GM12878 (cell line): ENCODE measurements at regions of chr12 and their contacts with region 1.

Region 1: DNA sequence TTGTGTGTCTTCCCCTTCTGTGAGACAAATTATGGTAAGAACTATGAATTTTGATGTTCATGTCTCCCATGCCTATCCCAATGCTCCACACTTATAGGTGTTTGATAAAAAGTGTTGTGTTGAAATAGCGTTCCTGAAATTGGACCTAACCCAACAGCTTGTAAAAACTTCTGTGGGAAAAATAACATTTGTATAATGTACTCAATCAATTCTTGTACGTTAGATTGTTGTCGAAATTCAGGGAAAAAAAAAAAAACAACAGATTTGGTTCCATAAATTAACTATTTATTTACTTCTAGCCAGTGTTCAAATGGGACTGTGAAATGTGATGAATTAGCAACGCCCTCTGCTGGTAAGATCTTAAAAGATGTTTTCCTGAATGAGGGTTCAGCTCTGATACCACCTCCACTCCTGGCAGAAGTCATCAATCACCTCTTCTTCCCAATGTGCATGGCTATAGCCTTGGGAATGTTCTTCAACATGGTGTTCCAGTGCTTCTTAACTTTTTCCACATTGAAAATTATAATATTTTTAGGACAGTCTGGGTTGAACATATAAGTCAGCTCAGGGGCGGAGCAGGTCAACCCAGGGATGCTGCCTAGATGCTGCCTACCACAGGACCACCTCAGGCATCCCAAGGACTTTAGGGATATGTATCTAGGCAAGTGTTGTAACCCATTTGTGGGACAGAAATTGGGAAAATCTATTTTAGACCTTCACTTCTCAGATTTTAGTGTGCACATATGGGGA is 170.6 kb downstream of the OTOGL start:
- DNase-seq: no peak
- ATAC-seq: peak; percentile 86
- H3K4me3 ChIP-seq: no peak overlapping the region
- H3K27ac ChIP-seq: no peak overlapping the region
- H3K4me1 ChIP-seq: no peaks in the 10 kb centered on the region
- H3K27me3 ChIP-seq: no peaks in the 10 kb centered on the region; a peak in 1 of 4 replicates
- CTCF ChIP-seq: peak; percentile 46 to 69 (median 63); a peak in 5 of 6 replicates
- EP300 ChIP-seq: no peak
- POLR2A ChIP-seq: no peak
- RAD21 ChIP-seq: peak; percentile 65

Region 2: DNA sequence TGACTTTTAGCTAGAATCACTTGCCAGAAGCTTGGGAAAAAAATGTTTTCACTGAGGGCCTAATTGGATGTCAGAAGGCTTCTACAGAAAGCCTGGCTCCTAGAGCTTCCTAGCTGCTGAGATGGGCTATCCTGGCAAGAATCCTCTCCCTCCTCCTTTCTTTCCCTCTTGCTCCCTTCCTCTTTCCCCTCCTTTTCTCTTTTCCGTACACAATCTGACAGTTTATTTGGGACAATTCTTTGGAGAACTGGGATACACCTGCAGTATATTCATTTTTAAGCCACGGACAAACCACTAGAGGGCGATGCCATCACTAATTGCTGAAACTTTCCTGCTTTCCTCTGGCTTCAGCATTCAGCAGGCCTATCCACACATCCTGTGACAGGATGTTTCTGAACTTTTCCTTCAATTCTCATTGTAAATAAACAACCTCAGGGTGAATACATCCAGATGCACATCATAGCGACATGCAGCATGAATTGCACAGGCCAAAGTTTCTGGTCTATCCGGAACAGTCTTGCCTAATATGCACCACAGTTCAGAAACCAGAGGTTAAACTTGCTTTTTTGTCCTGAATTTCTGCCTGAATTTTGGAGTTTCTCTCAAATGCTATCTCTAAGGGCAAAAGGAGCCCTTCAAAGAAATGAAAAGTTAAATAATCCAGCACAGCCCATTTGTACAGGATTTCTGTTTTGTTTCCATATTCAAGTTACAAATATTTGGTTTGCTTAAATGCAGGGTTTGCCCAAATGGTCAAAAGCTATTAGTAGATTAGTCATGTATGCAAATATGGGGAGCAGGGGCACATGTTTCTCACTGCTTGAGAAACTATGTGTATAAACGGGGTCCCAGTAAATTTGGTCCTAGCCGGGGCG is 722.0 kb before region 1 on chr12:
- CTCF ChIA-PET with region 1: interaction called, 6 read pairs
- POLR2A ChIA-PET with region 1: no interaction called
- RAD21 ChIA-PET with region 1: no interaction called
- SMC1A ChIA-PET with region 1: interaction called, 3 read pairs
- in situ Hi-C with region 1: no loop called
- intact Hi-C with region 1: loop called (anchors 5 kb)
- DNase-seq: peak; percentile 9
- ATAC-seq: peak; percentile 88
- H3K4me3 ChIP-seq: no peak overlapping the region
- H3K27ac ChIP-seq: no peak overlapping the region
- H3K4me1 ChIP-seq: no peaks in the 10 kb centered on the region
- H3K27me3 ChIP-seq: no peaks in the 10 kb centered on the region
- CTCF ChIP-seq: peak; percentile 69 to 74 (median 71)
- EP300 ChIP-seq: no peak
- POLR2A ChIP-seq: no peak
- RAD21 ChIP-seq: peak; percentile 74

Region 3: DNA sequence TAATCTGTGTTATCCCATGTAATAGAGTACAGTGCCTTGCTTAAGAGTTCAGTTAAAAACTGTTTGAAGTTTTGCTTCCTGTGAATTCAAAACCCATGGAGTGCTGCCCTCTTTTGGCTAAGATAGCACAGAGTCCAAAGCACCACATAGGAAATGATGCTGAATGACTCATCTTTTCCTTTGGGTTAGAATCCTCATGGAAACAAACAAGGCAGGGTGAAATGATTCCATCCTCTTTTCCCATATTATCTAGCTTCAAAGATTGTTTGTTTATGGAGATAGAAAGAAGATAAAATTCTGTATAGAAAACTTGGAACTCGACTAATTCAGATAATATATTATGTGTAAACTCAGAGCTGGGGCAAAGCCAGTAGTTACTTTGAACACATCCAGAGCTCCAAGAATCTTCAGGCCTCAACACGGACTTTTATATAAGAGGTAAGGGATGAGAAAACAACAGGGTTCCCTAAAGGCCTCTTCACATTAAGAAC is 83.2 kb before region 1 on chr12:
- CTCF ChIA-PET with region 1: interaction called, 134 read pairs
- POLR2A ChIA-PET with region 1: no interaction called
- RAD21 ChIA-PET with region 1: interaction called, 4 read pairs
- SMC1A ChIA-PET with region 1: interaction called, 6 read pairs
- in situ Hi-C with region 1: no loop called
- intact Hi-C with region 1: no loop called
- DNase-seq: peak; percentile 26
- ATAC-seq: peak; percentile 77
- H3K4me3 ChIP-seq: no peak overlapping the region
- H3K27ac ChIP-seq: no peak overlapping the region
- H3K4me1 ChIP-seq: peaks cover 9% of the 10 kb centered on the region
- H3K27me3 ChIP-seq: no peaks in the 10 kb centered on the region; a peak in 1 of 4 replicates
- CTCF ChIP-seq: peak; percentile 58 to 74 (median 68)
- EP300 ChIP-seq: peak in 1 of 2 experiments; percentile 41; a peak in 1 of 4 replicates
- POLR2A ChIP-seq: no peak
- RAD21 ChIP-seq: peak; percentile 86

Region 4: DNA sequence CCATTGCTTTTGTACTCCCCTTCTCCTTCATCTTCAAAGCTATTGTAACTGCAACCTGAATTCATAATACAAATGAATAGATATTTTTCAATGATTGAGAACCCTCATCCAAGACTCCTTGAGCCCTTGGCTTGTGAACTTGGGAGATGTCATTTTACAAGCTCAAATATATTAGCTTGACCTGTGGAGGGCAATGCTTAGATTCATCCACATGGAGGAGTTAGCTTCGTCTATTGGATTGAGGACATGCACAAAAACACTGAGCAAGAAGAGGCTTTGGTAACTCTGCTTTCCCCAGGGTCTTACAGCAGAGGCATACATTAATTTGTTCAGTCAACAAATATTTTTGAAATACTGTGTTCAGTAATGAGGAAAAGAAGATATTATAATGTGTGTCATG is 69.6 kb before region 1 on chr12:
- CTCF ChIA-PET with region 1: interaction called, 134 read pairs
- POLR2A ChIA-PET with region 1: no interaction called
- RAD21 ChIA-PET with region 1: interaction called, 26 read pairs
- SMC1A ChIA-PET with region 1: interaction called, 57 read pairs
- in situ Hi-C with region 1: no loop called
- intact Hi-C with region 1: loop called (anchors 1 kb)
- DNase-seq: no peak
- ATAC-seq: no peak
- H3K4me3 ChIP-seq: no peak overlapping the region
- H3K27ac ChIP-seq: no peak overlapping the region
- H3K4me1 ChIP-seq: no peaks in the 10 kb centered on the region
- H3K27me3 ChIP-seq: no peaks in the 10 kb centered on the region
- CTCF ChIP-seq: no peak
- EP300 ChIP-seq: no peak
- POLR2A ChIP-seq: no peak
- RAD21 ChIP-seq: no peak

Region 5: DNA sequence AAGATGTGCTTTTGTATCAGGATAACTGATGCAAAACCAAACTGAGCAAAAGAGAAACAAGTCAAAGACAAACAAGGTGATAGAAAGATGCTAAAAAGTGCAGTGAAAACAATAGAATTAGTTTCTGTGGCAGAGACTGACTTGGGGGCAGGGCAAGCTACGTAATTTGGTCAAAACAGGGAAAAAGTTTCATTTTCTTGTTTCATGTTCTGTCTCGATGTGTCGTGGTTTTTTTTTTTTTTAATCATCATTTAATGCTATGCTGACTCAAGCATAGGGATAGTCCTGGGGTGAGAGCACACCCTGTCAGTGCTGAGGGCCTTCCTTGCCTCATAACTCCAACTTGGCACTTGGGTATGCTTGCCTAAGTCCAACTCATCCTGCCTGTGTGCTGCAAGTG is 30.0 kb after region 1 on chr12:
- CTCF ChIA-PET with region 1: interaction called, 4 read pairs
- POLR2A ChIA-PET with region 1: interaction called, 3 read pairs
- RAD21 ChIA-PET with region 1: no interaction called
- SMC1A ChIA-PET with region 1: interaction called, 10 read pairs
- in situ Hi-C with region 1: no loop called
- intact Hi-C with region 1: no loop called
- DNase-seq: peak; percentile 76
- ATAC-seq: peak; percentile 88
- H3K4me3 ChIP-seq: peak overlapping the region; percentile 46; the same call in 1 of the 2 replicates
- H3K27ac ChIP-seq: peak overlapping the region; percentile 73
- H3K4me1 ChIP-seq: peaks cover 26% of the 10 kb centered on the region
- H3K27me3 ChIP-seq: no peaks in the 10 kb centered on the region
- CTCF ChIP-seq: no peak
- EP300 ChIP-seq: peak; percentile 90 to 96
- POLR2A ChIP-seq: no peak
- RAD21 ChIP-seq: no peak